GM12878 (cell line): ENCODE measurements at regions of chr10 and their contacts with region 1.

Region 1: DNA sequence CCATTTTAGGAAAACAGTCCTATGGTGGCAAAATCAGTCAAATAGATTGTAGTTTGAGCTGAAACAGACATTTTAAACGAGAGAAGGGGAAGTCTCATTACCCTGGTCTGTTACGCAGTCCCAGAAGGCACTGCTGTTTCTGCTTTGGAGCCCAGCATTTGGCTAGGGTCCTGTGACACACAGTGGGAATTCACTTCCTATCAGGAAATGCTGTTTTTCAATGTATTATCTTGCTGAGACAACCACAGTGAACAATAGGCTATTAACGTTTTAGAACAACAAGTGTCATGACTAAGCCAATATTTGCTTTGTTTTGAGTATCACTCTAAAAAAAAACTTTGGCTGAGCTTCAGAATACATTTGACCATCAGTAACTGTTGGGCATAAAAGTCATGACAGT is 74.1 kb downstream of the ADD3 start:
- DNase-seq: no peak
- ATAC-seq: peak; percentile 11
- H3K4me3 ChIP-seq: no peak overlapping the region
- H3K27ac ChIP-seq: peak overlapping the region; percentile 57; the same call in 1 of the 2 replicates
- H3K4me1 ChIP-seq: peaks cover 22% of the 10 kb centered on the region
- H3K27me3 ChIP-seq: no peaks in the 10 kb centered on the region
- CTCF ChIP-seq: no peak
- EP300 ChIP-seq: no peak
- POLR2A ChIP-seq: no peak
- RAD21 ChIP-seq: no peak

Region 2: DNA sequence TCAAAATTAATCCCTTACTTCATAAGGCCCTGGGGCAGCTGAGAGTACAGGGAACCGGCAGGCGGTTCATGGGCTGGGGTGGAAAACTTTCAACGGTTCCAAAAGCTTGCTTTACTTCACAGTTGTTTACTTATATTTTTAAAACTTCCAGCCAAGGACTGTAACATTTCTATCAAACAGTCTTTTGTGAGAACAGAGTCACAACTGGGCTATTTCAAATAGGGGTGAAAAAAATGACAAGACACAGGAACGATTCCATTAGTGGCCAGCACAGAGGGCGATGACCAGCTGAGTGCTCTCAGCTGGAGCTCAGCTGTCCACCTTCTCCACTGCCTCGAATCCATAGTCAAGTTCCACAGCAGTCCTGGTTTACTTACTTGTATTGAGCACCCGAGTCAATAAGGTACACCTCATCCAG is 206.8 kb before region 1 on chr10:
- CTCF ChIA-PET with region 1: no interaction called
- POLR2A ChIA-PET with region 1: no interaction called
- RAD21 ChIA-PET with region 1: no interaction called
- SMC1A ChIA-PET with region 1: no interaction called
- in situ Hi-C with region 1: no loop called
- intact Hi-C with region 1: no loop called
- DNase-seq: no peak
- ATAC-seq: no peak
- H3K4me3 ChIP-seq: no peak overlapping the region
- H3K27ac ChIP-seq: no peak overlapping the region
- H3K4me1 ChIP-seq: no peaks in the 10 kb centered on the region
- H3K27me3 ChIP-seq: no peaks in the 10 kb centered on the region
- CTCF ChIP-seq: no peak
- EP300 ChIP-seq: no peak
- POLR2A ChIP-seq: no peak
- RAD21 ChIP-seq: no peak

Region 3: DNA sequence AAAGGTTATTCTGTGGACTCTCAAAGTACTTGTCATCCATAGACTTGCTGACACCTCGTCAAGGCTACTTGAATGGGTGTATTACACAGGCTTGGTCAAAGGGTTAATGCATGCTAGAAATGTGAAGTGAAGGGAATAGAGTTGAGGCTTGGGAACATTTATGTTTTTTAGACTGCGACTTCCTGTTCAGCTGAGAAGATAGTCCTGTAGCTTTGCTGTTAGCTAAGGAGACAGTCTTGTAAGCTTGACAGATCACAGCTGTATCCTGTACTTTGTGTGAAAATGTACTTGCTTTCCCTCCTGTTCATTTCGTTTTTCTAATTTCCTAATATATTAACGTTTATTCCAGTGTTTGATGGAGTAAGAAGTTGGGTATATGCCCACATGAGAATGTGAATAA is 22.0 kb before region 1 on chr10:
- CTCF ChIA-PET with region 1: interaction called, 5 read pairs
- POLR2A ChIA-PET with region 1: interaction called, 7 read pairs
- RAD21 ChIA-PET with region 1: interaction called, 5 read pairs
- SMC1A ChIA-PET with region 1: interaction called, 67 read pairs
- in situ Hi-C with region 1: no loop called
- intact Hi-C with region 1: no loop called
- DNase-seq: no peak
- ATAC-seq: peak; percentile 31; the same call in 1 of the 3 replicates
- H3K4me3 ChIP-seq: no peak overlapping the region
- H3K27ac ChIP-seq: no peak overlapping the region; the same call in 1 of the 2 replicates
- H3K4me1 ChIP-seq: peaks cover 24% of the 10 kb centered on the region
- H3K27me3 ChIP-seq: no peaks in the 10 kb centered on the region
- CTCF ChIP-seq: no peak
- EP300 ChIP-seq: no peak
- POLR2A ChIP-seq: no peak
- RAD21 ChIP-seq: no peak